Common myeloid progenitor, CD34-positive (primary cell): ENCODE measurements at regions of chr9 and their contacts with region 1.

Region 1: GRCh38 chr9:98263482-98264357 is 8.3 kb upstream of the TBC1D2 start:
- DNase-seq: peak; percentile 77 to 92 (median 89)
- H3K4me3 ChIP-seq: no peak overlapping the region
- H3K27ac ChIP-seq: no peak overlapping the region
- H3K4me1 ChIP-seq: no peaks in the 10 kb centered on the region
- H3K27me3 ChIP-seq: no peaks in the 10 kb centered on the region

Region 2: DNA sequence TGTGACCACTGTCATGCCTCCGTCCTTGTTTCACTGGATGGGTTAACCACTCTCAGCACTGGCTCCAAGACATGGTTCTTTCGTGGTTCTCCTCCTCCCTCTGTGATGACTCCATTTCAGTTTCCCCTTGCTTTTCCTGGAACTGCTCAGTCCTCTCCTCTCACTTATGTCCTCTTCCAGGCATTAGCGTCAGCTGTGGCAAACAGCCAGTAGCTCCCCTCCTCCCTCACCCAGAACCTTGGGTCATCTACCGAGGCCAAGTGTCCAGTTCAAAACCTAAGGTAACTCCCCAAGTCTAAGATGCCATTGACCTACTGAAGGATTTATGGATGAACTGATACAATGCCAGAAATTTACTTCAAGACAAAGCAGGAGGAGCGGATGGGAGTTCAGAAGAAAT is 61.5 kb before region 1 on chr9:
- CTCF ChIA-PET with region 1: interaction called, 52 read pairs
- POLR2A ChIA-PET with region 1: interaction called, 3 read pairs
- DNase-seq: no peak
- H3K4me3 ChIP-seq: no peak overlapping the region
- H3K27ac ChIP-seq: no peak overlapping the region
- H3K4me1 ChIP-seq: peaks cover 0 to 2% (median 0%) of the 10 kb centered on the region in 4 experiments
- H3K27me3 ChIP-seq: no peaks in the 10 kb centered on the region

Region 3: DNA sequence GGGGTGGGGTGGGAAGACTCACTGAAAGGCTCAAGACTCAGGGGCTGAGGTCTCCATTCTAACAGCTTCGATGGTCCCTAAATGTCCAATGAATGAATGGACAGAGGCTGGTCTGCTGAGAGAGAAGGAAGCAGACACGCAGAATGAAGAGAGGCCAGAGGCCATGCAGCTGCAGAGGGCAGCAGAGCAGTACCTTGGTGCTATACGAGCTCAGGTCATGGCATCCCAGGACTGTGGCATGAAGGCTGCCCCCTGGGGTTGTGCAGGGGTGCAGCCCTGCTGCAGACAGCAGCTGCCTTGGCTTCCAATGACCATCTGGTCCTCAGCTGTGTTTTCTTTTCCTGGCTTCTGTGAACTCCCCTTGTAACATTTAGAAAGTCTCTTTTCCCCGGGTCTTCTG is 56.1 kb before region 1 on chr9:
- CTCF ChIA-PET with region 1: interaction called, 52 read pairs
- POLR2A ChIA-PET with region 1: no interaction called
- DNase-seq: no peak
- H3K4me3 ChIP-seq: no peak overlapping the region
- H3K27ac ChIP-seq: no peak overlapping the region
- H3K4me1 ChIP-seq: peaks cover 0 to 2% (median 0%) of the 10 kb centered on the region in 4 experiments
- H3K27me3 ChIP-seq: no peaks in the 10 kb centered on the region

Region 4: DNA sequence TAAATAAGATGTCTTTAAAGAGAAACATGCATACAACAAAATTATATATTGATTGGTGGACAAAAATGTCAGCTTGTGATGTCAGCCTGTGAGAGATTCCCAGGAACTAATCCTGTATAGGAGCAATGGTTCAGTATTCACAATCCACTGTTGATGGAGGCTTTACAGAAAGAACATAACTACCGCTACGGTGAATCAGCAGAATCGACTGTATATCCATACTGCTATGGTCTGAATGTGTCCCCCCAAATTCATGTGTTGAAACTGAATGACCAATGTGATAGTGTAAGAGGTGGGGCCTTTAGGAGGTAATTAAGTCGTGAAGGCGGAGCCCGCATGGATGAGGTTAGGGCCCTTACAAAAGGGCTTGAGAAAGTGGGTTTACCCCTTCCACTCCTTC is 32.1 kb after region 1 on chr9:
- CTCF ChIA-PET with region 1: no interaction called
- POLR2A ChIA-PET with region 1: no interaction called
- DNase-seq: no peak
- H3K4me3 ChIP-seq: no peak overlapping the region
- H3K27ac ChIP-seq: no peak overlapping the region
- H3K4me1 ChIP-seq: no peaks in the 10 kb centered on the region
- H3K27me3 ChIP-seq: peaks cover 0 to 5% (median 0%) of the 10 kb centered on the region in 5 experiments